CD8-positive, alpha-beta memory T cell (primary cell): ENCODE measurements at regions of chr9 and their contacts with region 1.

Region 1: DNA sequence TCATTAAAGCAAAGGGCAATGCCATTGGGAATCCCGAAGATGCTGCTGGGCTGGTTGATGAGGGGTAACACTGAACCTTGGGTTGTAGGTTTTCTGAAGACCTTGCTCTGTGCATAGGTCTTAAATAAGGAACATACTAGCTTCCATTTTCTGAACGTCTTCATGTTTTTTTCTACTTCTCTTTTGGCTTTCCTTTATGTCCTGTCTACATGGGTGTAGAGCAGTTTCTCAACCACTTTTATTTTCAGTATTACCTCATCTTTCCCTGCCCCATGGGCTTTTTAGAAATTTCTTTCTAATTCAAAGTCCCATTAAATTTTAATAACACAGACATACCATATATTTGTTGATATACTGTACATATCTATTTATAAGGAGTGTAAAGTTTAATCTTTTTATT is at the start of gene IFNA14:
- DNase-seq: no peak
- H3K4me3 ChIP-seq: no peak within 1 kb of the TSS
- H3K4me3 Mint-ChIP-seq: no peak within 1 kb of the TSS
- H3K27ac ChIP-seq: no peak within 1 kb of the TSS
- H3K27ac Mint-ChIP-seq: no peak within 1 kb of the TSS
- H3K4me1 ChIP-seq: peaks cover 5% of the 10 kb centered on the region
- H3K4me1 Mint-ChIP-seq: peaks cover 9 to 13% (median 12%) of the 10 kb centered on the region in 3 donors
- H3K27me3 ChIP-seq: no peaks in the 10 kb centered on the region
- H3K27me3 Mint-ChIP-seq: peaks cover 11 to 45% of the 10 kb centered on the region in 2 donors
- total RNA-seq, gene IFNA14: not detected

Region 2: DNA sequence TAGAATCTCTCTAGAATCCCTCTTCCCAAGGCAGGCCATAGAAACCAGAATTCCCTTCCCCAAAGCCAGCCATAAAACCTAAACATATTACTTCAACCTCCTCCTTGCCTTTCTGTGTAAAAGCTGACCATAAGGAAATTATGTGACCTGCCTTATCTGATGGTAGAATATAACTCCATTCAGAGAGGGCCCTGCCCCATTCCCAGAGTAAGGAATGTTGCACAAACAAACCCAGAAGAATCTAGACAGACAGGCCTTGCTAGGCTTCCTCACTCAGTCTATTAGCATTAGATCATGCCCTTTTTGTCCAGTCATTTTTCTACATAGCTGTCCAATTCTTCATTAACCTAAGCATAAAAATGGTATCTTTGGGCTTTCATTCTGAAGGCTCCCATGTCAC is 144.4 kb before region 1 on chr9:
- CTCF ChIA-PET with region 1: no interaction called
- POLR2A ChIA-PET with region 1: no interaction called
- DNase-seq: no peak
- H3K4me3 ChIP-seq: peak overlapping the region; percentile 68
- H3K4me3 Mint-ChIP-seq: peak overlapping the region in 4 of 7 donors; percentile 35 to 79 (median 66)
- H3K27ac ChIP-seq: no peak overlapping the region
- H3K27ac Mint-ChIP-seq: peak overlapping the region; percentile 86 to 95 (median 90)
- H3K4me1 ChIP-seq: peaks cover 17% of the 10 kb centered on the region
- H3K4me1 Mint-ChIP-seq: peaks cover 23 to 40% (median 38%) of the 10 kb centered on the region in 3 donors
- H3K27me3 ChIP-seq: no peaks in the 10 kb centered on the region
- H3K27me3 Mint-ChIP-seq: no peaks in the 10 kb centered on the region

Region 3: DNA sequence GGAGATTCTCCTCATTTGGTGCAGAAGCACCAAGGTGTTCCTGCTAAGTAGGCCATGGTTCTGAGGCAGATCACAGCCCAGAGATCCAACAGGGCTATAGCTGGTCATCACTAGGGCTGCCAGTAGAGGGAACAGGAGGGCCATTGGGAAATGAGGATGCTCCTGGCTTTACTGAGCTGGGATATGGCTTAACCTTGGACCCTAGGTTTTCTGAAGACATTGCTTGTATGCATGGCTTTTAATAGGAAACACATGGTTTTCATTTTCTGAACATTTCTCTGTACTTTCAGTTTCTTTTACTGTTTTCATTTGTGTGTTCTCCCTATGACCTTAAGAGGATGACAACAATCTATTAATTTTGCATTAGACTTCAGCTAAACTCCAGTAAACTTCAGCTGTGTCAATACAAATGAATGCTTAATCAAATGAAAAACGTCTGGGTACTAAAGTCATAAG is 98.5 kb before region 1 on chr9 and contains the start of gene IFNW1:
- CTCF ChIA-PET with region 1: no interaction called
- POLR2A ChIA-PET with region 1: no interaction called
- DNase-seq: no peak
- H3K4me3 ChIP-seq: no peak within 1 kb of the TSS
- H3K4me3 Mint-ChIP-seq: peak within 1 kb of the TSS in 1 of 7 donors; percentile 43
- H3K27ac ChIP-seq: no peak within 1 kb of the TSS
- H3K27ac Mint-ChIP-seq: peak within 1 kb of the TSS in 1 of 8 donors; percentile 11
- H3K4me1 ChIP-seq: peaks cover 12% of the 10 kb centered on the region
- H3K4me1 Mint-ChIP-seq: peaks cover 24 to 34% (median 26%) of the 10 kb centered on the region in 3 donors
- H3K27me3 ChIP-seq: no peaks in the 10 kb centered on the region
- H3K27me3 Mint-ChIP-seq: peaks cover 0 to 1% of the 10 kb centered on the region in 2 donors
- total RNA-seq, gene IFNW1: not detected

Region 4: GRCh38 chr9:21154018-21154608 is 85.8 kb before region 1 on chr9:
- CTCF ChIA-PET with region 1: interaction called, 10 read pairs
- POLR2A ChIA-PET with region 1: no interaction called
- DNase-seq: peak in 2 of 5 donors; percentile 2 to 4
- H3K4me3 ChIP-seq: no peak overlapping the region
- H3K4me3 Mint-ChIP-seq: no peak overlapping the region
- H3K27ac ChIP-seq: no peak overlapping the region
- H3K27ac Mint-ChIP-seq: peak overlapping the region in 1 of 8 donors; percentile 45
- H3K4me1 ChIP-seq: peaks cover 3% of the 10 kb centered on the region
- H3K4me1 Mint-ChIP-seq: peaks cover 12 to 20% (median 15%) of the 10 kb centered on the region in 3 donors
- H3K27me3 ChIP-seq: no peaks in the 10 kb centered on the region
- H3K27me3 Mint-ChIP-seq: peaks cover 0 to 1% of the 10 kb centered on the region in 2 donors

Region 5: GRCh38 chr9:21252721-21253547 is 13.0 kb after region 1 on chr9:
- CTCF ChIA-PET with region 1: interaction called, 10 read pairs
- POLR2A ChIA-PET with region 1: no interaction called
- DNase-seq: peak in 2 of 5 donors; percentile 7 to 8
- H3K4me3 ChIP-seq: no peak overlapping the region
- H3K4me3 Mint-ChIP-seq: peak overlapping the region in 2 of 7 donors; percentile 2 to 37
- H3K27ac ChIP-seq: no peak overlapping the region
- H3K27ac Mint-ChIP-seq: no peak overlapping the region
- H3K4me1 ChIP-seq: peaks cover 4% of the 10 kb centered on the region
- H3K4me1 Mint-ChIP-seq: peaks cover 6 to 7% (median 7%) of the 10 kb centered on the region in 3 donors
- H3K27me3 ChIP-seq: no peaks in the 10 kb centered on the region
- H3K27me3 Mint-ChIP-seq: peaks cover 8 to 45% of the 10 kb centered on the region in 2 donors